ENCODE measurements at regions of chr5 and their contacts with region 1.

Region 1: GRCh38 chr5:173331956-173332479 is 3.8 kb upstream of the STC2 start:
- DNase-seq: peak; percentile 98
- H3K4me3 Mint-ChIP-seq: peak overlapping the region; percentile 43
- H3K27ac Mint-ChIP-seq: peak overlapping the region; percentile 84
- H3K4me1 Mint-ChIP-seq: peaks cover 22% of the 10 kb centered on the region
- H3K27me3 Mint-ChIP-seq: peaks cover 5% of the 10 kb centered on the region

Region 2: DNA sequence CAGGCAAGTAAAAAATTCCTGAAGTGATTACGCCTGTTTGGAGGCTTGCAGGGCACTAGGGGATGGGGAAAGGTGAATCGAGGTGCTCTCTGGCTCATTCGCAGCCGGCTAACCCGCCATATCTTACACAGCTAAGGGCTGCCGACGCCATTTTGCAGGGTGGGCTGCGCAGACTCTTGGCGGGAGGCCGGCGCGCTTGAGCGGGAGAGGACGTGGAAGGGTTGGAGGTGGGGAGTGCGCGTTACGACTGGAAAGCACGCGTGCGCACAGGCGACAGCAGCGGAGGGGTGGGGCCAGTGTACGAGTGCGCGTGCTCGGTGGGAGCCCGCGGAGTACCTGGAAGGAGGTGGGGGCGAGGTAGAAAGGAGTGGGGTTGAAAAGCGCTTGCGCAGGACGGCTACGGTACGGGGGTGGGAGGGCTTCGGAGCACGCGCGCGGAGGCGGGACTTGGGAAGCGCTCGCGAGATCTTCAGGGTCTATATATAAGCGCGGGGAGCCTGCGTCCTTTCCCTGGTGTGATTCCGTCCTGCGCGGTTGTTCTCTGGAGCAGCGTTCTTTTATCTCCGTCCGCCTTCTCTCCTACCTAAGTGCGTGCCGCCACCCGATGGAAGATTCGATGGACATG is 1944.6 kb before region 1 on chr5 and contains the start of gene NPM1:
- intact Hi-C with region 1: loop called (anchors 5 kb)
- DNase-seq: peak; percentile 99
- H3K4me3 Mint-ChIP-seq: peak within 1 kb of the TSS; percentile 94
- H3K27ac Mint-ChIP-seq: peak within 1 kb of the TSS; percentile 100
- H3K4me1 Mint-ChIP-seq: peaks cover 41% of the 10 kb centered on the region
- H3K27me3 Mint-ChIP-seq: peaks cover 10% of the 10 kb centered on the region
- total RNA-seq, gene NPM1: 3,066 and 3,162 TPM in 2 replicates

Region 3: GRCh38 chr5:172777881-172778814 is 553.9 kb before region 1 on chr5:
- intact Hi-C with region 1: loop called (anchors 5 kb)
- DNase-seq: peak; percentile 71
- H3K4me3 Mint-ChIP-seq: peak overlapping the region; percentile 60
- H3K27ac Mint-ChIP-seq: peak overlapping the region; percentile 87
- H3K4me1 Mint-ChIP-seq: peaks cover 35% of the 10 kb centered on the region
- H3K27me3 Mint-ChIP-seq: no peaks in the 10 kb centered on the region

Region 4: DNA sequence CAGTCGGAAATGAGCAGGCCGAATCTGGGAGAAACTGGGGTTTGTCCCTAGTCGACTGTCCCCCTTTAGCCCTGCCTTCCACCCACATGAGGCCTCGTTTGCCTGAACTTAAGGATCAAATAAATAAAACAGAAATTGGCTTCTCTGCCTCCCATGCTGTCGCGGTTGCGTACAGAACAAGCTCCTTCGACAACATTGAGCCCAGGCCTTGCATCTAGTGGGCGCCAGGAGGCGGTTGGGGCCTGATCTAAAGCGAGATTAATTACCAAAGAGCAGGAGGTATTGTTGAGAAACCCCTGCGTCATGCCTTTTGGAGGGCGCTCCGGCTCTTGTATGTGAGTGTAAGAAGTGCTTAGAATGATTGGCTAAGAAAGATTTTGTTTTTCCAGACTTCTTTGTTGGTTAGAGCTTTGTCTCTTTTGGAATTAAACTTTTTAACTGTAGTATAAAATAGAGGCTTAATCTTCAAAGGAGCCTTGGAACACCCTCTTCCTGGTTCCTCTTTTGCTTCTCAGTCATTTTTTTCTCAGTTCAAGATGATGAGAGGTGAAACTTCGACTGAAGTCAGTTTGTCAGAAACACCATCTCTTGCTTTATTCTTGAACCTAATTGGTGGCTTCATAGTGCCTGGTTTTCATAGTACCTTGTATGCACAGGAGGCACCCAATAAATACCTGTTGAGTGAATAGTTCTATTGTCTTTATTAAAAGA is 347.6 kb before region 1 on chr5:
- intact Hi-C with region 1: loop called (anchors 1 kb)
- DNase-seq: peak; percentile 90
- H3K4me3 Mint-ChIP-seq: peak overlapping the region; percentile 98
- H3K27ac Mint-ChIP-seq: peak overlapping the region; percentile 99
- H3K4me1 Mint-ChIP-seq: peaks cover 20% of the 10 kb centered on the region
- H3K27me3 Mint-ChIP-seq: no peaks in the 10 kb centered on the region

Region 5: GRCh38 chr5:173245319-173246134 is 86.5 kb before region 1 on chr5:
- intact Hi-C with region 1: loop called (anchors 2 kb)
- DNase-seq: no peak
- H3K4me3 Mint-ChIP-seq: no peak overlapping the region
- H3K27ac Mint-ChIP-seq: peak overlapping the region; percentile 29
- H3K4me1 Mint-ChIP-seq: peaks cover 3% of the 10 kb centered on the region
- H3K27me3 Mint-ChIP-seq: peaks cover 90% of the 10 kb centered on the region

Region 6: GRCh38 chr5:173615884-173616576 is 284.0 kb after region 1 on chr5:
- intact Hi-C with region 1: loop called (anchors 1 kb)
- DNase-seq: peak; percentile 91
- H3K4me3 Mint-ChIP-seq: peak overlapping the region; percentile 95
- H3K27ac Mint-ChIP-seq: peak overlapping the region; percentile 95
- H3K4me1 Mint-ChIP-seq: peaks cover 32% of the 10 kb centered on the region
- H3K27me3 Mint-ChIP-seq: no peaks in the 10 kb centered on the region

Measured in activated CD4-positive, alpha-beta T cell treated with anti-CD3 and anti-CD28 coated beads, Interleukin-2, amount 10 ng/mL, durations not matched to agents 24 days and 14 days (primary cell).